Right ventricle myocardium superior (tissue), 1 donor: ENCODE measurements at regions of chr4 and their contacts with region 1.

Region 1: GRCh38 chr4:146342600-146343192 is 128.4 kb downstream of the REELD1 start:
- DNase-seq: no peak
- ATAC-seq: no peak

Region 2: DNA sequence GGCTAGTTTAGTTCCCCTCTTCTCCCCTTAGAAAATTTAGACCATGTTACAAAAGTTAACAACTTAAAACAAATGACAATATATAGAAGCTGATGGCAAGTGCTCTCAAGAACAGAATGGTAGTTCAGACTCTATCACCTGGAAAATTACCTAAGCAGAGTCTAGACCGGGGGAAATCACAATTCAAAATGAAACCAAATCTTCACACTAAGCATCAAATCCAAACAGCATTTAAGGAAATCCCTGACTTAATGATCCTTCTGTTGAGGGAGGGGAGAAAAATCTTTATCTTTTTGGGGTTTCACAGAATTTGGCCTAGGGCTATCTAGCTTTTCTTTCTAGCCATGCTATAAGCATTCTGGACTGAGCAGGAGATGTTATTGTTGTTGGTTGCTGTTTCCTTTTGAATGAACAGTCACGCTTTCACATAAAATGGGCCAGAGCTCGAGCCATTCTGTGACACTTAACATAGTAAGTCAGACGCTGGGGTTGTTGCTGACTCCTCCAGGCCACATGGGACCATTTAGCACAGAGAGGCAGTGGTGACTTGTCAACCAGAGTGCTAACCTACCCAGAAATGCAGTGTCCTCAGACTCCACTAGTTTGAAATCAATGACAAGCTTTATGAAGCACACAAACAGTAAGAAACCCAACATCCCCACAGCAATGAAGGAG is 183.2 kb before region 1 on chr4:
- intact Hi-C with region 1: no loop called
- DNase-seq: no peak
- ATAC-seq: no peak

Region 3: GRCh38 chr4:146299607-146300006 is 43.1 kb before region 1 on chr4:
- intact Hi-C with region 1: no loop called
- DNase-seq: no peak
- ATAC-seq: no peak

Region 4: GRCh38 chr4:146522098-146522868 is 179.6 kb after region 1 on chr4:
- intact Hi-C with region 1: loop called (anchors 10 kb)
- DNase-seq: peak; percentile 96
- ATAC-seq: peak; percentile 100

Region 5: DNA sequence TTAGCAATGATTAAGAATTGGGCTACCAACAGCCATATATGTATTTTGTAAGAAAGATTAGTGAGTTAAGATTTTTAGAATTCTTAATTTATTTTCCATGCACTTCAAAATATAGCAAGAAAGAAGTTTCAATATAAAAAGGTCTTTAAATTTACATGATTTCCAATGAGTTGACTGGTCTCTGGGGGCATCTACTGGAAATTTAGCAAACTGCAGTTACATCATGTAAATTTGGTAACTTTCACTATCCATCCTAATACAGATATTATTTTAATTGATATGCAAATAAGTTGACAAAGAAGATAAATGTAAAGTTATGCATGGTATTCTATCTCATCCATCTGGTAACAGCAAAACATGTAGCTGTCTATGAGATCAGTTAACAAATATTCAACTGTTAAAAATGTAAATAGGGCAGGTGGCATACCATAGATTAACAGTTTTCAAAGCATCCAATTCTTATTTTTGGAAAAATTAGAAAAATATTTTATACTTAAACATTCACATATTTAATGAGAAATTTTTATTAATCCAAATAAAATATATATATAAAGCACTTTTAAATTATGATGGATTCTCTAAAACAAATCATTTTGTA is 573.9 kb after region 1 on chr4:
- intact Hi-C with region 1: loop called (anchors 10 kb)
- DNase-seq: no peak
- ATAC-seq: no peak